ENCODE measurements at regions of chrX and their contacts with region 1.

Region 1: DNA sequence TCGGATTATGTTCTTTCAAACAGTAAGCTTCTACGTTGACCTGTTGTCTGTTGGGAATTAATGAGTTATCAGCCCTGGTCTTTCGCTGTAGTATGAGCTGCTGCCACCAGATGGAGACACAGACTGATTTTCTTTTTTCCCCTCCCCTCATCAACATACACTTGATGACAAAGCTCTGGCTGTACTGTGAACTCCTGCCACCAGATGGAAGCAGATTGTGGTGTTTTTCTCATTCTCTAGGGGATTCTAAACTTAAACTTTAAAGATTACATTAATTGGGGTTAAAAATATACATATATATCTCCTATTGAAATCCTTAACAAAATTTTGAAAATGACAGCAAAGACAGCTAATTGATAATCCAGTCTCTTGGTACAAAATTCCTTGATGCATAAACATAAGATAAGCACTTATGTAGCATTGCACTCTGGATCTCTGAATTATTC is 44.8 kb downstream of the SMS start:
- DNase-seq: peak in 1 of 2 donors; percentile 38
- ATAC-seq: peak; percentile 83 to 94
- H3K4me3 ChIP-seq: no peak overlapping the region
- H3K27ac ChIP-seq: no peak overlapping the region
- H3K4me1 ChIP-seq: no peaks in the 10 kb centered on the region
- H3K27me3 ChIP-seq: no peaks in the 10 kb centered on the region
- CTCF ChIP-seq: peak; percentile 71 to 83 (median 75)
- POLR2A ChIP-seq: no peak

Region 2: DNA sequence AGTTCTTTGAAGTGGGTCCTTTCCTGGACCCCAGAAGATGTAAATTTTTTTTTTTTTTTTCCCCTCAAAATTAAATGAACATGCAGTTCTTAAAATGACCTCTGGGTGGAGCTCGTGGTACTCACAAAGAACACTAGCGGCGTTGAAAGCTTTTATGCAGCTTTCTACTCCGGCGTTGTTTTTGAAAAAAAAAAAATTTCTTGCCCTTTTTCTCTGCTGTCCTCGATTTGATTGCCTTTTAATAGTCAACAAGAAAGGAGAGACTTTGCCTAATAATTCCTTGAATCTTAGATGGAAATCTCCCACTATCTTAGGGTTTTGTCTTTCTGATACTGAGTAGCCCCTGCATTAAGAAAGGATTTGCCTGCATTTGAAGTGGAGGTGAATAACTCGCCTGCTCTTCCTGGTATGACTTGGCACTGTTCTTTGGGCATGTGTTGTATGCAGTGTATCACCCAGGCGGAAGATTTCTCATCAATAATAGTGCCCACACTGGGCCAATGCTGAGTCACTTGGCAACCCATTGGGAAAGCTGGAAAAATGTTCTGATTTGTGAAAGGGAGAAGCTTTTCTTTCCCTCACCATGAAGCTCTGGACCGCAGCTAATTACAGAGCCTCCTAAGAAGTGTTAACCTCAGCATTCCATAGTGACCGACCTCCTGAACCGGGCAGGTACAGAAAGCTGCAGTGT is 150.8 kb after region 1 on chrX:
- in situ Hi-C with region 1: no loop called
- intact Hi-C with region 1: loop called (anchors 10 kb)
- DNase-seq: no peak
- ATAC-seq: peak in 1 of 2 donors; percentile 49
- H3K4me3 ChIP-seq: no peak overlapping the region
- H3K27ac ChIP-seq: no peak overlapping the region
- H3K4me1 ChIP-seq: no peaks in the 10 kb centered on the region
- H3K27me3 ChIP-seq: no peaks in the 10 kb centered on the region
- CTCF ChIP-seq: peak; percentile 24 to 76 (median 45)
- POLR2A ChIP-seq: no peak

Region 3: DNA sequence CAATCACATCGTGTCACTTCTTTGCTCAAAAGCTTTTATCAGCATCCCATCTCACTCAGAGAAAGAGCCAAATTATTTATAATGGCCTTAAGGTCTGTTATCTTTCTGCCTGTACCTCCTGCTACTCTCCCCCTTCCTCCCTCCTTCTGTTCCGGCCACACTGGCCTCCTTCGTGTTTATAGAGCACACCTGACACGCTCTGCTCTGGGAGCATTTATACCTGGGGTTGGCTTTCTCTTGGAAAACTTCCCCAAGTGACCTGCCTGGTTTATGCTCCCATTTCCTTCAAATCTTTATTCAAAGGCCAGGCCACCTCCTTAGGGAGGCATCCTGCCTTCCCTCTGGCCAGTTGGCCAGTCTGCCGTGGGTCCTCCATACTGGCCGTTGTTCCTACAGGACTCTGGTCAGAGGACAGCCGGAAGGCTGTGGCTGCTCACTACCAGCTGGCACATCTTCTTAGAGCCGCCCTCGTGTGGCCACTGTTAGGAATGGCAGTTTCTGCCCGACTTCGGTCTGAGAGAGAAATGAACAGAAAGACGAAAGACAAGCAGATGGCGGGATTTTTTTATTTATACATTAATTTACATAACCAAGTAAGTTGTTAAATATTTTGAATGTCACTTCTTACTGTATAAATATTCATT is 207.2 kb after region 1 on chrX:
- in situ Hi-C with region 1: loop called in 2 of 4 experiments (anchors 10 to 25 kb)
- intact Hi-C with region 1: loop called (anchors 5 kb)
- DNase-seq: peak; percentile 7 to 23
- ATAC-seq: peak in 1 of 2 donors; percentile 70
- H3K4me3 ChIP-seq: no peak overlapping the region
- H3K27ac ChIP-seq: no peak overlapping the region
- H3K4me1 ChIP-seq: no peaks in the 10 kb centered on the region
- H3K27me3 ChIP-seq: no peaks in the 10 kb centered on the region
- CTCF ChIP-seq: peak; percentile 33 to 75 (median 53)
- POLR2A ChIP-seq: no peak

Measured in gastrocnemius medialis (tissue), 4 donors.